Activated CD4-positive, alpha-beta T cell treated with anti-CD3 and anti-CD28 coated beads for 36 hours (primary cell): ENCODE measurements at regions of chr13 and their contacts with region 1.

Region 1: DNA sequence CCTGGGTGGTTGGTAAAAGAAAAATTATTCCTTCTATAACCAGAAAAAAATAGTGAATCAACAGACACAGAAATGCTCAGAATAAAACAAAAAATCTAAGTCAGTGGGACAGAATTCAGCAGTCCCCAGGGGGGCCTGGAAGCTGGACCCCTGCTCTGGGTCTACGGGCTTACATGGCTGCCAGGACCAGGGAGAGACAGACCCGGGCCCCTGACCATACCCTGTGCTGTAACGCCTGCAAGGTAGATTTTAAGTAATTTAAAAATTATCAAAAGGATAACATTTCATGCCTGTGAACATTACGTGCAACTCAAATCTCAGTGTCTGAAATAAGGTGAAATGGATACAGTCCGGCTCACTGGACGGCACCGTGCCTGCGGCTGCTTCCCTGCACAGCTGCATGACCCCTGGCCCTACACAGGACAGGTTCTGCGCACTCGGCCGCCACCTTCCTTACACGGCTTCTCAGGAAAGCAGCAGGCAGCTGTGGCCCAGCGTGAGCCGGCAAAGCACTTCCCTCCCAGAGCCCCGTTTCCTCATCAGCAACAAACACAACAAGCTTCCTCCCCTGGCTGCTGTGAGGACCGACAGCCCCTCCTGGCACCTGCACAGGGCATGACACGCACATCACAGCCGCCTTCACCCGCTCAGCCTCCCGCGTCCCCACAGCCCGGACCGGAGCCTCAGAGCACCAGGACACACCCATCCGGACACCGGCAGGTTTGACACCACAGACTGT is 22.2 kb downstream of the RASA3 start:
- DNase-seq: peak; percentile 85
- ATAC-seq: peak; percentile 82
- H3K4me3 Mint-ChIP-seq: peak overlapping the region; percentile 74
- H3K27ac Mint-ChIP-seq: peak overlapping the region; percentile 90
- H3K4me1 Mint-ChIP-seq: peaks cover 81% of the 10 kb centered on the region
- H3K27me3 Mint-ChIP-seq: no peaks in the 10 kb centered on the region

Region 2: DNA sequence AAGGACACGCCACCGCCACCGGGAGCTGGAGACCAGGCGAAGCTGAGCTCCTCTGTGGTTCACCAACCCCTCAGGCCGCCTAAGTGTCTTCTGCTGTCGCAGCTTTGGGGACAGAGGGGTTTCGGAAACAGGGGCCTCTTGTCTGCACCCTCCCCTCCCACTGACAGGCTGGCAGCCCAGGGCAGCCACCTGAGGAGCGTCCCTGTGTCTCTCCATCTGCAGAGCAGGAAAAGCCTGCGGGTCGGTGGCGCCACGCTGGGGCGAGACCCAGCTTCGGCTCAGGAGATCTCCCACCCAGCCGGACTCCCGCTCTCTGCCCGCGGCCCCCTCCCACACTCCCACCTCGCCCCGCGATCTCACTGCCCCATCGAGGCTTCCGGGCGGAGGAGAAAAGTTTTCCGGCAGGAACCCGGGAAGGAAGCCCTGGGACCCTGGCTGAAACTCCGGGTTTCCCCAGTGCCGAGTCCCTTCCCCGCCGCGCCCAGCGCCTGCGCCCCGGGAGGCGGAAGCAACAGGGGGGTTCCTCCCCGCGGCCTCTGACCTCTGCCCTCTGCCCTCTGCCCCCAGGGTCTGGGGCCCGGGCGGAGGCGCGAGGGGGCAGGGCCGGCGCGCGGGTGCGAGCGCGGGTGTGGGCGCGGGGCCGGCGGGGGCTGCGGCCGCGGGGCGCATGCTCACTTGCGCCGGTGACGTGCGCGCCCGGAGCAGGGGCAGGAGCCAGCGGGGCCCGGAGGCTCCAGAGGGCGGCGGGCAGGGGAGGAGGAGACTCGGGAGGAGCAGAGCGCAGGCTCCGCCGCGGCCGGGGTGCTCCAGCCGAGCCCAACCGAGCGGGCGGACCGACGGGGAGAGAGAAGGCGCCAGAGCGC is 1420.7 kb before region 1 on chr13 and contains the start of gene ATP11A:
- CTCF ChIA-PET with region 1: no interaction called
- POLR2A ChIA-PET with region 1: no interaction called
- intact Hi-C with region 1: no loop called
- DNase-seq: peak; percentile 90
- ATAC-seq: peak; percentile 84
- H3K4me3 Mint-ChIP-seq: peak within 1 kb of the TSS; percentile 84
- H3K27ac Mint-ChIP-seq: peak within 1 kb of the TSS; percentile 91
- H3K4me1 Mint-ChIP-seq: peaks cover 49% of the 10 kb centered on the region
- H3K27me3 Mint-ChIP-seq: no peaks in the 10 kb centered on the region
- total RNA-seq, gene ATP11A: 42.1 to 50.7 TPM

Region 3: GRCh38 chr13:113816946-113817859 is 293.1 kb before region 1 on chr13:
- CTCF ChIA-PET with region 1: interaction called, 3 read pairs
- POLR2A ChIA-PET with region 1: no interaction called
- intact Hi-C with region 1: loop called in 1 of 2 experiments (anchors 10 kb)
- DNase-seq: peak; percentile 95
- ATAC-seq: peak; percentile 85
- H3K4me3 Mint-ChIP-seq: peak overlapping the region; percentile 96
- H3K27ac Mint-ChIP-seq: no peak overlapping the region
- H3K4me1 Mint-ChIP-seq: peaks cover 21% of the 10 kb centered on the region
- H3K27me3 Mint-ChIP-seq: no peaks in the 10 kb centered on the region

Region 4: GRCh38 chr13:113951246-113951999 is 158.8 kb before region 1 on chr13:
- CTCF ChIA-PET with region 1: no interaction called
- POLR2A ChIA-PET with region 1: no interaction called
- intact Hi-C with region 1: loop called in 1 of 2 experiments (anchors 1 kb)
- DNase-seq: peak; percentile 83
- ATAC-seq: peak; percentile 89
- H3K4me3 Mint-ChIP-seq: no peak overlapping the region
- H3K27ac Mint-ChIP-seq: no peak overlapping the region
- H3K4me1 Mint-ChIP-seq: peaks cover 6% of the 10 kb centered on the region
- H3K27me3 Mint-ChIP-seq: no peaks in the 10 kb centered on the region

Region 5: DNA sequence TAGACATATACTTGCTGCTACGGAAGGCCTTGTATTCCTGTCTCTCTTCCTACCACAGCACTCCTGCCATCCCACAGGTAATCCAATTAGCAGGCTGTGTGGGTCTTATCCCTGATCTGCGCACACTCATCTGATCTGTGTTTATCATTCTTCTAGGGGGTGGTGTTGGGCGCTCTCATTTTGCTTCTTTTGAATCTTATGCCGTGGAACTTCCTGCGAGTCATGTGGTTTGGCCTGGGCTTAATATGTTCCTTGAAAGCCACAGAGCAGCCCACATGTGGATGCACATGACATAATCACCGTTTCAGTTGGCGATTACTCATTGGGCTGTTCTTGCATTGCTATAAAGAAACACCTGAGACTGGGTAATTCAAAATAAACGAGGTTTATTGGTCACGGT is 14.7 kb after region 1 on chr13:
- CTCF ChIA-PET with region 1: interaction called, 6 read pairs
- POLR2A ChIA-PET with region 1: interaction called, 7 read pairs
- intact Hi-C with region 1: loop called in 1 of 2 experiments (anchors 2 kb)
- DNase-seq: peak; percentile 90
- ATAC-seq: peak; percentile 58
- H3K4me3 Mint-ChIP-seq: peak overlapping the region; percentile 21
- H3K27ac Mint-ChIP-seq: peak overlapping the region; percentile 91
- H3K4me1 Mint-ChIP-seq: peaks cover 85% of the 10 kb centered on the region
- H3K27me3 Mint-ChIP-seq: no peaks in the 10 kb centered on the region

Region 6: DNA sequence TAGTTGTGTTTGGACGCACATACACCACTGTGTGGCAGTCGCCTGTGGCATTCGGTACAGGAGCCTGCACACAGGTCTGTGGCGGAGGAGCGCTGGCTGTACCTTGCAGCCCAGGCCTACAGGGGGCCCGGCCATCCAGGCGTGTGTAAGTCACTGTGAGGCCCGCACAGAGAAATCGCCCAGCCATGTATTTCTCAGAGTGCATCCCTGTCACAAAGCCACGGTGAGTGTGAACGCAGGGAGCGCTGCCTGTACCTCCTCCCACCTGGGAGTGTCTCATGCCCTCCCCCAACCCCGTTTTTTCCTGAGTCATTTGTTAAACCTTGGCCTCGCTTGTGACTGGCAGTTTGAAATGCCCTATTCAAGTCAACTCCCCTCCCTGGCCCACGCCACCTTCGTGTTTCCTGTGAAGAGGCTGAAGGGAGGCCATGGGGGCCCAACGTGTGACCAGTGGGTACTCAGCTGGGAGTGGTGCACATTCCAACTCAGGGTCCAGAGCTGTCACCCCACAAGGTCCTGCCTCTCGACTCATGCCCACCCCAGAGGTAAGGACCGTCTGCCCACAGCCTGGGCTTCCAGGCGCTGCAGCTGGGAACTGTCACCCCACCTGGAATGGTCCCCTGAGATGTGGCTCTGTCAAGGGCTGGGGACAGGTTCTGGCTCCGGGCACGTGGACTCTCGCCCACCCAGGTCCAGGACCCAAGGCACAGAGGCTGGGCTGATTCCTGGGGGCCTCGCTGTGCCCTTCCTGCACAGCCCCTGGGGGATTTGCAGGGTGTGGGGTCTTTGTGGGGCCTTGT is 33.7 kb after region 1 on chr13:
- CTCF ChIA-PET with region 1: interaction called, 4 read pairs
- POLR2A ChIA-PET with region 1: no interaction called
- intact Hi-C with region 1: loop called in 1 of 2 experiments (anchors 5 kb)
- DNase-seq: peak; percentile 76
- ATAC-seq: peak; percentile 47
- H3K4me3 Mint-ChIP-seq: no peak overlapping the region
- H3K27ac Mint-ChIP-seq: peak overlapping the region; percentile 39
- H3K4me1 Mint-ChIP-seq: peaks cover 12% of the 10 kb centered on the region
- H3K27me3 Mint-ChIP-seq: no peaks in the 10 kb centered on the region